Activated CD4-positive, alpha-beta T cell treated with anti-CD3 and anti-CD28 coated beads, Interleukin-2, amount 10 ng/mL, durations not matched to agents 7 days and 5 days (primary cell): ENCODE measurements at regions of chr12 and their contacts with region 1.

Region 1: GRCh38 chr12:111424793-111425251 is 19.1 kb downstream of the SH2B3 start:
- DNase-seq: no peak
- H3K4me3 Mint-ChIP-seq: no peak overlapping the region
- H3K27ac Mint-ChIP-seq: peak overlapping the region; percentile 68
- H3K4me1 Mint-ChIP-seq: peaks cover 68% of the 10 kb centered on the region
- H3K27me3 Mint-ChIP-seq: no peaks in the 10 kb centered on the region

Region 2: DNA sequence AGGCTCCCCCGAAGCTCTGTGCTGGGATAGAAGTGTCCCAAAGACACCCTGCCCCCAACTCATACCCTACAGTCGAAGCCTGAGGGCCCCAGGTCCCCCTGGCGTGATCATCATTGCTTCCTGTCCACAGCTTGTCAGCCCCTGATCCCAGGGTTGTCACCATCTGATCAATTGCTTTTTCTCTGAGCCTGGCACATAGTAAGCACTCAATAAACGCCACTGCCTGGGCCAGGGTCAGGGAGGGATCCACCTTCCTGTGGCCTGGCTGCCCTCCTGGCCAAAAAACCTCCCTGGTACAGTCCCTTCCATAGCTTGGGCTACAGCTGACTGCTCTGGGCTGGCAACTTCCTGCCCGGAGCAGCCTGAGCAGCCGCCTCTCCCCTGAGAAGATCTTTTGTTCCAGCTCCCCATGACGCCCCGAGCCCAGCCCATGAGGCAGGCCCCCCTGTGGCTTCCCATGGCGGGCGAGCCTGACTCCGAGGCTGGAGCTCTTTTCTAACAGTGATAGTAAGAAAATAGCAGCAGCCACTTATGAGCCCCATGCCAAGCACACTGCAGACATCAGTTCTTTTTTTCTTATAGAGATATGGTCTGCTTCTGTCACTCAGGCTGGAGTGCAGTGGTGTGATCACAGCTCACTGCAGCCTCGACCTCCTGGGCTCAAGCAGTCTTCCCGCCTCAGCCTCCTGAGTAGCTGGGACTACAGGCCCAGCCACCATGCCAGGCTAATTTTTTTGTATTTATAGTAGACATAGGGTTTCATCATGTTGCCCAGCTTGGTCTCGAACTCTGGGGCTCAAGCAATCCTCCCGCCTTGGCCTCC is 12.6 kb before region 1 on chr12:
- CTCF ChIA-PET with region 1: interaction called, 13 read pairs
- POLR2A ChIA-PET with region 1: interaction called, 3 read pairs
- DNase-seq: no peak
- H3K4me3 Mint-ChIP-seq: peak overlapping the region; percentile 1
- H3K27ac Mint-ChIP-seq: peak overlapping the region; percentile 88
- H3K4me1 Mint-ChIP-seq: peaks cover 72% of the 10 kb centered on the region
- H3K27me3 Mint-ChIP-seq: no peaks in the 10 kb centered on the region

Region 3: GRCh38 chr12:111529424-111530368 is 104.9 kb after region 1 on chr12:
- CTCF ChIA-PET with region 1: no interaction called
- POLR2A ChIA-PET with region 1: no interaction called
- DNase-seq: peak; percentile 68
- H3K4me3 Mint-ChIP-seq: no peak overlapping the region
- H3K27ac Mint-ChIP-seq: no peak overlapping the region
- H3K4me1 Mint-ChIP-seq: peaks cover 3% of the 10 kb centered on the region
- H3K27me3 Mint-ChIP-seq: no peaks in the 10 kb centered on the region